ENCODE measurements at regions of chr6 and their contacts with region 1.

Region 1: DNA sequence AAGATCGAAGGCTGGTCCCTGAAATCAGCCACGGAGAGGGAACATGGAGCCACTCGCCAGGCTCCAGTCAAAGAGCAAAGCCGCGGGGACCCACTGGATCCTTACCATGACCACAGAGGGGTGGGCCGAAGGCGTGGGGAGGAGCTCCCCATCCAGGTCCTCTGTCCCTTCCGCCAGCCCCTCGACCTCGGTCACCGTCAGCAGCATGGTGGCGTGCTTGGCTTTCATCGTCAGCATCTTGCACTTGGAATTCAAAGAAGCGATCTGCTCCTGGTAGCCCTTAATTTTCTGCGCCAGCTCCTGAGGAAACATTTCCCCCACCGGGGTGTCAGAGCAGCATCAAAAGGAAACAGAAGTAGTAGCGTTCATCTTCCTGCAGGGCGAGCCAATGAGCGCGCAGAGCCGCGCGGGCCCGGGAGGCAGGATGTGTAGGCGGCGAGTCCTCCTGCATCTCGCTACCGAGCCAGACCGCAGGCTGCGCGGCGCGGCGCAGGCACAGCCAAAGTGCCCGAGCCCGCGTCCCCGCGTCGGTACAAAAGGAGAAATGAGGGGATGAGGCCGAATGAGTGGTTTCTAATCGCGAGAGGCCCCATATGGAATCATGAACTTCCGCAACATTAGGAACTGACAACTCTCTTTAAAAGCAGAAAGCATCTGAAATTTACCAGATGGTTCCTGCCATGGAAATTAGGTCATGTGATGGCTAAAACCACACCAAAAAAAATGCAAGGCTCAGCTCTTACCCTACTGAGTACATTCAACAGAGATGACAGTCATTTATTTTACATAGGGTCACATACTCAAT is 335.2 kb downstream of the SYNE1 start:
- DNase-seq: peak; percentile 91
- ATAC-seq: peak; percentile 96
- H3K4me3 Mint-ChIP-seq: peak overlapping the region; percentile 99
- H3K27ac Mint-ChIP-seq: peak overlapping the region; percentile 99
- H3K4me1 Mint-ChIP-seq: peaks cover 26% of the 10 kb centered on the region
- H3K27me3 Mint-ChIP-seq: no peaks in the 10 kb centered on the region

Region 2: GRCh38 chr6:152184917-152185574 is 116.9 kb before region 1 on chr6:
- POLR2A ChIA-PET with region 1: interaction called, 12 read pairs
- DNase-seq: no peak
- ATAC-seq: peak; percentile 81
- H3K4me3 Mint-ChIP-seq: peak overlapping the region; percentile 87
- H3K27ac Mint-ChIP-seq: peak overlapping the region; percentile 97
- H3K4me1 Mint-ChIP-seq: peaks cover 33% of the 10 kb centered on the region
- H3K27me3 Mint-ChIP-seq: no peaks in the 10 kb centered on the region

Region 3: GRCh38 chr6:152232501-152233151 is 69.3 kb before region 1 on chr6:
- POLR2A ChIA-PET with region 1: interaction called, 10 read pairs
- DNase-seq: no peak
- ATAC-seq: peak; percentile 44
- H3K4me3 Mint-ChIP-seq: peak overlapping the region; percentile 84
- H3K27ac Mint-ChIP-seq: peak overlapping the region; percentile 92
- H3K4me1 Mint-ChIP-seq: peaks cover 26% of the 10 kb centered on the region
- H3K27me3 Mint-ChIP-seq: no peaks in the 10 kb centered on the region

Region 4: GRCh38 chr6:152261179-152261578 is 40.8 kb before region 1 on chr6:
- POLR2A ChIA-PET with region 1: no interaction called
- DNase-seq: no peak
- ATAC-seq: no peak
- H3K4me3 Mint-ChIP-seq: no peak overlapping the region
- H3K27ac Mint-ChIP-seq: no peak overlapping the region
- H3K4me1 Mint-ChIP-seq: no peaks in the 10 kb centered on the region
- H3K27me3 Mint-ChIP-seq: no peaks in the 10 kb centered on the region

Region 5: GRCh38 chr6:152338335-152339125 is 36.6 kb after region 1 on chr6:
- POLR2A ChIA-PET with region 1: interaction called, 11 read pairs
- DNase-seq: peak; percentile 63
- ATAC-seq: peak; percentile 78
- H3K4me3 Mint-ChIP-seq: no peak overlapping the region
- H3K27ac Mint-ChIP-seq: no peak overlapping the region
- H3K4me1 Mint-ChIP-seq: peaks cover 2% of the 10 kb centered on the region
- H3K27me3 Mint-ChIP-seq: peaks cover 9% of the 10 kb centered on the region